PC-9 (cell line): ENCODE measurements at regions of chr10 and their contacts with region 1.

Region 1: GRCh38 chr10:93006435-93007039 is 54.1 kb upstream of the CYP26C1 start:
- DNase-seq: peak in 1 of 2 experiments; percentile 39
- H3K4me3 ChIP-seq: no peak overlapping the region
- H3K27ac ChIP-seq: no peak overlapping the region
- H3K4me1 ChIP-seq: no peaks in the 10 kb centered on the region
- H3K27me3 ChIP-seq: no peaks in the 10 kb centered on the region
- CTCF ChIP-seq: peak; percentile 57

Region 2: DNA sequence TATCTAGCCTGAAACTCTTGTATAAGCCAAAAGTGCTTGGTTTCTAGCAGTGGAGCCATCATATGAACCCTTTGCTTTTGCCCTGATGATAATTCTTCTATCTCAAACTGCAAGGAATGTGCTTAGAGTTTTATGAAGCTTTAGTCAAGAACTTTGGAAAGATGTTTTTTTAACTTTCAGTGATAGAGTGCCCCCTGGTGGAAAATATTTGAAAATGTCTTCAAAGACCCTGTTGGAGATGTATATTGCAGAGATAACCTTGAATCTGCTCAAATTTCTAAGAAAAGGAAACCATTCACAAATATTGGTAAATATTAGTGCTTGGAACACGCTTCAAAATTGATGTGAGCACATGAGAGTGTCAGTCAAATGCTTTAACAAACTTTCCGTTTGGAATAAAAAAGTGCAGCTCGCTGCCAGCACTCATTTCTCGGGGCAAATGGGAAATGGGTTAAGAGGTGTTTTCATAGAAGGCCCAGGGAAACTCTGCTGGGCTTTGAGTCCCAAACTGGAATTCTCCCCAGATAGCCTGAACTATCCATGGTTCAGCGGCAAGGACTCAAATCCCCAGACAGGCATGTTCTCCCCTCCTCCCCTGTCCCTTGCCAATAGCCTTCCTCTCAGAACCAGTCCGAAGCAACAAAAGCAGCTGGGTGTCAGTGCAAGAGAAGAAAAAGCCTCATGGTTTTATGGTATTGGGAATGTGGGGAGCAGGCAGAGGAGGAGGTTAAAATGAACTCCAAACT is 346.3 kb after region 1 on chr10:
- CTCF ChIA-PET with region 1: interaction called, 3 read pairs
- POLR2A ChIA-PET with region 1: no interaction called
- intact Hi-C with region 1: loop called (anchors 5 kb)
- DNase-seq: no peak
- H3K4me3 ChIP-seq: no peak overlapping the region
- H3K27ac ChIP-seq: no peak overlapping the region
- H3K4me1 ChIP-seq: no peaks in the 10 kb centered on the region
- H3K27me3 ChIP-seq: no peaks in the 10 kb centered on the region
- CTCF ChIP-seq: peak; percentile 79

Region 3: DNA sequence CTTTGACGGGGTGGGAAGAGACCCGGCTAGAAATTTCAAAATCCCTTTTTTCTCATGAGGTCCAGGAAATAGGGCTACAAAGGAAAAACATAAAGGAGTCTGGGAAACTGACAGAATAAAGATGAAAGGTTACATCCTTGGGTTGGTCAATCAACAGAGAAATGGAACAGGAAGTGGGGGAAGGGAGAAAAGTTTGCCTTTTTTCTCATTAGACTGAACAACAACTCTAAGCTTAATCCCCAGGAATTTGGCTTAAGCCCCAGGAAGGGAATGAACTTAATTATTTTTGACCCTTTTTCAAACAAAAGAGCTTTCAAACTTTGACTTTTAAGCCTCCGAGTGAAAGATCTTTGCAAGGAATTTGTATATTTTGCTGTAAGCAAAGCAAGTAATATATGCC is 783.9 kb after region 1 on chr10:
- CTCF ChIA-PET with region 1: interaction called, 10 read pairs
- POLR2A ChIA-PET with region 1: no interaction called
- intact Hi-C with region 1: no loop called
- DNase-seq: no peak
- H3K4me3 ChIP-seq: no peak overlapping the region
- H3K27ac ChIP-seq: no peak overlapping the region
- H3K4me1 ChIP-seq: no peaks in the 10 kb centered on the region
- H3K27me3 ChIP-seq: no peaks in the 10 kb centered on the region
- CTCF ChIP-seq: no peak